GM10248 (cell line): ENCODE measurements at regions of chr17 and their contacts with region 1.

Region 1: GRCh38 chr17:57422574-57423164 is 166.3 kb downstream of the MSI2 start:
- DNase-seq: peak; percentile 60
- CTCF ChIP-seq: no peak

Region 2: DNA sequence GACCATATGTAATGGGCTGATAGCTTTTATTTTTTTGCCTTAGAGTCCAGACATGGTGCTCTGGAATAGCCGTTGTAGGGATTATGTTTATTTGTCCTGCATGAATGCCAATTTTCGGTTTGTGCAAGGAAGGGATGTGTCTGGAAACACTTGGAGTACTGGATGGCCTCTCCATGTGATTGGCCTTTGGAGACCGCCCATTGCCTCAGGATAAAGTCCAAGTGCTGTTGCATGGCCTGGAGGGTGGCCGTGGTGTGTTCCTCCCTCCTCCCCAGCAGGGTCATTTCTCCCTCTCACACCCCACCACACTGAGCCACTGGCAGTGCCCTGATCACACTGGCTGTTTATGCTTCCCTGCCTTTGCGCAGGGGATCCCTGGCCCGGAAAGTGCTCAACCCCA is 72.4 kb before region 1 on chr17:
- CTCF ChIA-PET with region 1: no interaction called
- POLR2A ChIA-PET with region 1: no interaction called
- DNase-seq: no peak
- CTCF ChIP-seq: no peak

Region 3: GRCh38 chr17:57440522-57441485 is 18.1 kb after region 1 on chr17:
- CTCF ChIA-PET with region 1: interaction called, 10 read pairs
- POLR2A ChIA-PET with region 1: no interaction called
- DNase-seq: peak; percentile 77
- CTCF ChIP-seq: peak; percentile 47